Caco-2 (cell line): ENCODE measurements at regions of chr3 and their contacts with region 1.

Region 1: DNA sequence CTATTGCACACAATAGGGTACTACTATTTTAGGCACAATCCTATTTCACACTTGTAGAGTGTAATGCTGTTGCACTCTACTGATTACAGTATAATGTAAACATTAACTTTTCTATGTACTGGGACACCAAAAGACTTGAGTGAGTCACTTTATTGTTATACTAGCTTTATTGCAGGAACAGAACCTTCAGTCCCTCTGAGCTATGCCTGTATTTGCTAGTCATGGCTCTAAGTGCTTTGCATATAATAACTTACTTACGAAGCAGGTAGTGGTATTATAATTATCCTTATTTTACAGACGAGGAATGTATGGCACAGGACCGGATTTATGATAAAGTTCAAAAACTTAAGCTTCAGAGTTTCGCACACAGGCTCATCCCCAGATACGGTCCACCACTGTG is 106.6 kb upstream of the SLC6A6 start:
- DNase-seq: no peak
- H3K4me3 ChIP-seq: peak overlapping the region; percentile 21
- H3K4me3 Mint-ChIP-seq: peak overlapping the region; percentile 64
- H3K27ac Mint-ChIP-seq: peak overlapping the region; percentile 97
- H3K4me1 ChIP-seq: peaks cover 64% of the 10 kb centered on the region
- H3K4me1 Mint-ChIP-seq: peaks cover 31% of the 10 kb centered on the region
- H3K27me3 ChIP-seq: no peaks in the 10 kb centered on the region
- H3K27me3 Mint-ChIP-seq: no peaks in the 10 kb centered on the region
- CTCF ChIP-seq: no peak

Region 2: GRCh38 chr3:14319654-14320182 is 23.9 kb after region 1 on chr3:
- CTCF ChIA-PET with region 1: interaction called, 14 read pairs
- POLR2A ChIA-PET with region 1: interaction called, 7 read pairs
- intact Hi-C with region 1: loop called (anchors 1 kb)
- DNase-seq: peak; percentile 77 to 85
- H3K4me3 ChIP-seq: no peak overlapping the region
- H3K4me3 Mint-ChIP-seq: peak overlapping the region; percentile 51
- H3K27ac Mint-ChIP-seq: peak overlapping the region; percentile 86
- H3K4me1 ChIP-seq: peaks cover 53% of the 10 kb centered on the region
- H3K4me1 Mint-ChIP-seq: peaks cover 37% of the 10 kb centered on the region
- H3K27me3 ChIP-seq: no peaks in the 10 kb centered on the region
- H3K27me3 Mint-ChIP-seq: no peaks in the 10 kb centered on the region
- CTCF ChIP-seq: no peak

Region 3: DNA sequence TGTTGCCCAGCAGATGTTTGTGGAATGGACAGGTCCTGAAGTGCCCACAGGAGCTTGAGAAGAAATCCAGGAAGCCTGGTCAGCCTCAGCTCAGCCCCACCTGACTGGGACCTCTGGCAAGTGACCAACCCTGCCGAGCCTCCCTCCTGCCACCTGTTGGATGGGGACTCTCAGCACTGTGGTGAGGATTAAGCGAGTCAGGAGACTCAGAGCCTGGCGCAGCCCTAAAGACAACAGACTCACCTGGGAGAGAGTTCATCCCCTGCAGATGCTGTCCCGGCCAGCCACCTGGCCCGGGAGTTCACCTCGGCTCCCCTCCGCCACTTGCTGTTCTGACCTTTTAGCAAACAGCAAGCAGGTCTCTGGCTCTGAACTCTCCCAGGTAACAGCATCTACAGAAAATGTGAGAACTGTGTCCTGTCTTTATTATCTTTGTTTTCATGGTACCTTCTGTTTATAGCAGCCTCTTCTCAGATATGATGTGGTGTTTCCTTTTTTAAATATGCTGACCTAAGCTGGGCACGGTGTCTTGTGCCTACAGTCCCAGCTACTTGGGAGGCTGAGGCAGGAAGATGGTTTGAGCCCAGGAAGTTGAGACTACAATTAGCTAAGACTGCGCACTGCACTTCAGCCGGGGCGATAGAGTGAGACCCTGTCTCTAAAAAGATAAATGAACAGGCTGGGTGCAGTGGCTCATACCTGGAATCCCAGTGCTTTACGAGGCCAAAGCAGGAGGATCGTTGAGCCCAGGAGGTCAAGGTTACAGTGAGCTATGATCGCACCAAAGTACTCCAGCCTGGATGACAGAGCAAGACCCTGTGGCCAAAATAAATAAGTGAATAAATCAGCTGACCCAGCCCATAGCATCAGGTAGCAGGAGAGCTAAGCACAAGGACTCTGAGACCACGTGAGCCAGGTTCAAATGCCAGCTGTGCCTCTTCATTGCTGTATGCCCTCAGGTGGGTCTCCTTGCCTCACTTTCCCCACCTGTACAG is 74.2 kb after region 1 on chr3:
- CTCF ChIA-PET with region 1: interaction called, 10 read pairs
- POLR2A ChIA-PET with region 1: no interaction called
- intact Hi-C with region 1: loop called (anchors 2 kb)
- DNase-seq: peak; percentile 75
- H3K4me3 ChIP-seq: no peak overlapping the region
- H3K4me3 Mint-ChIP-seq: no peak overlapping the region
- H3K27ac Mint-ChIP-seq: peak overlapping the region; percentile 26
- H3K4me1 ChIP-seq: peaks cover 44% of the 10 kb centered on the region
- H3K4me1 Mint-ChIP-seq: peaks cover 41% of the 10 kb centered on the region
- H3K27me3 ChIP-seq: no peaks in the 10 kb centered on the region
- H3K27me3 Mint-ChIP-seq: no peaks in the 10 kb centered on the region
- CTCF ChIP-seq: peak in 1 of 2 experiments; percentile 77

Region 4: DNA sequence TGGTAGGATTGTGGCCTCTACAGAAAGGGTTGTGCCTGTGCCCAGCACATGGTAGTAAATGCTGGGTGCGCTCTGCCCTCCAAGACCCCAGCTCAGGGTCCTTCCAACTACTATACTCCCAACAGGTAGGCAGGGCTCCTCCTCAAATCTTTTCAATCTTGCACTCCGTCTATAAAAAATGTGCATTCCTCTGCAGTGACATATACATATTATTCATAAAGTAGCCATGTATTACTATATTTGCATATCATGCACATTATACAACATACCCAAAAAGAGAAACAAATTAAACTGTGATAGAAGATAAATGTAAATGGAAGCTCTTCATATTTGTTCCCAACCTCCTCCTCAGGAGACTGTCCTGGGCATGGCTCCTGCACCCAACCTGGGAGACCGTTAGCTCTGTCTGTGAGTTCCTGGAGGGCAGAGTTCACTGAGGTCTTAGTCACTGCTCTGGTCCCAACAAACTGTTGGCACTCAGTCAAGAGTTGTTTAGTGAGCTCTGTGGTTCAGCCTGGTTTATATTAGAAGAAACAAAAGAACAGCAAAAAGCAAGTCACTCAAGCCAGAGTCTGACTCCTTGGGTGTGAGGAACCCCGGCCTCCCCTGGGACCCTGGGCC is 292.0 kb after region 1 on chr3:
- CTCF ChIA-PET with region 1: no interaction called
- POLR2A ChIA-PET with region 1: no interaction called
- intact Hi-C with region 1: no loop called
- DNase-seq: no peak
- H3K4me3 ChIP-seq: no peak overlapping the region
- H3K4me3 Mint-ChIP-seq: no peak overlapping the region
- H3K27ac Mint-ChIP-seq: no peak overlapping the region
- H3K4me1 ChIP-seq: peaks cover 20% of the 10 kb centered on the region
- H3K4me1 Mint-ChIP-seq: peaks cover 8% of the 10 kb centered on the region
- H3K27me3 ChIP-seq: no peaks in the 10 kb centered on the region
- H3K27me3 Mint-ChIP-seq: no peaks in the 10 kb centered on the region
- CTCF ChIP-seq: no peak